ENCODE measurements at regions of chr14 and their contacts with region 1.

Region 1: GRCh38 chr14:36398463-36399260 is 78.2 kb upstream of the MBIP start:
- DNase-seq: no peak
- H3K4me3 ChIP-seq: no peak overlapping the region
- H3K27ac ChIP-seq: no peak overlapping the region
- H3K4me1 ChIP-seq: no peaks in the 10 kb centered on the region
- H3K27me3 ChIP-seq: no peaks in the 10 kb centered on the region
- CTCF ChIP-seq: no peak
- EP300 ChIP-seq: no peak
- POLR2A ChIP-seq: no peak

Region 2: DNA sequence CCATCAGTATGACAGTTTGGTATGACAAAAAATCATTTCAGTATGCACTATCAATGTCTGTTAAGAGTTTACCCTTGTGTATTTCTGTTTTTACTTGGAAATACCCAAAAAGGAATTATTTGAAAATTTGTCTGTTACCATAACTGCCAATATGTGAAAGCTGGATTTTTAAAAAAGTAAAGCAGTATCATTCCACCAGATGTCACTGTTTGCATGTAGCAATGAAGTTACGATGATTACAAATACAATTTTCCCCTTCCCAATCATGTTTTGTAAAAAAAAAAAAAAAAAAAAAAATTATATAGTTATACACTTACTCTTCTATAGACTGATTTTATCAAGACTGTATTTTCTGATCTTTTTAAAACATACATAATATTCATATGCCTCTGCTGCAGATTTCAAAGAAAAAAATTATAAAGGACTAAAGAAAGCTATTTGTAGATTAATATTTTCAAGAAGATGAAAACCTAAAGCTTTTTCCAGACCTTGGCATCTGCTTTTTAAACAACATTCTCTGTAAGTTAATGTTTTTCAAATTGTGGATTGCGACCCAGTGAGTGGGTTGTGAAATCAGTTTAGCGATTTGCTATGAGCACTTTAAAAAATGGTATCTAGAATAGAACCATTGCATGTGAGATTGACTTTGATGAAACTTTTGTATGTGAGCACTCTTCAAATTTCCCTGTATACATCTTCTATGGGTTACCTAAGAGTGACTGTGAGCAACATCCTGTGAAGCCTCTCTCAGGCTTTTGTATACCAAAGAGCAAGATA is 1310.9 kb after region 1 on chr14:
- intact Hi-C with region 1: loop called in 1 of 4 experiments (anchors 5 kb)
- DNase-seq: no peak
- H3K4me3 ChIP-seq: no peak overlapping the region
- H3K27ac ChIP-seq: no peak overlapping the region
- H3K4me1 ChIP-seq: no peaks in the 10 kb centered on the region
- H3K27me3 ChIP-seq: no peaks in the 10 kb centered on the region
- CTCF ChIP-seq: no peak
- EP300 ChIP-seq: no peak
- POLR2A ChIP-seq: no peak

Measured in ovary (tissue), 10 donors.